Endothelial cell of umbilical vein (primary cell): ENCODE measurements at regions of chr2 and their contacts with region 1.

Region 1: DNA sequence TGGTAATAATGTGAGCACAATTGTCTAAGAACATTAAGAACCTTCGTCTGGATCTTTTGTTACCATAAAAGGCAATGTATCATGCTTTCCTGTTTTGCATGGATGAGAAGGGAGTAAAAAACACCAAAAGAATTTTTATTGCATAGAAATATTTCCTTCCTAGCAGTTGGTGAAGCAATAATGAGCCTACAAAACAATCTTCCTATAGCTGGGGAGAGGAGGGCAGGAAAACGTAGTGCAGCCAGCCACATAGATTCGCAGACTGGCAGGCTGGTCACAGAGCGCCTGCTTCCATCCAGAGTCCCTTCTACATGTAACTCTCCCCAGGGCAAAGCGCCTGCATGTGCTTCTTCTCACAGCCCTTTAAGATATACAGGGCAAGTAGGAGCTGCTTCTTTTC is 190.4 kb downstream of the BABAM2 start:
- DNase-seq: peak; percentile 93
- H3K4me3 ChIP-seq: peak overlapping the region in 1 of 3 experiments; percentile 1
- H3K27ac ChIP-seq: peak overlapping the region; percentile 88
- H3K4me1 ChIP-seq: peaks cover 31% of the 10 kb centered on the region
- H3K27me3 ChIP-seq: no peaks in the 10 kb centered on the region
- CTCF ChIP-seq: no peak
- POLR2A ChIP-seq: peak; percentile 73

Region 2: DNA sequence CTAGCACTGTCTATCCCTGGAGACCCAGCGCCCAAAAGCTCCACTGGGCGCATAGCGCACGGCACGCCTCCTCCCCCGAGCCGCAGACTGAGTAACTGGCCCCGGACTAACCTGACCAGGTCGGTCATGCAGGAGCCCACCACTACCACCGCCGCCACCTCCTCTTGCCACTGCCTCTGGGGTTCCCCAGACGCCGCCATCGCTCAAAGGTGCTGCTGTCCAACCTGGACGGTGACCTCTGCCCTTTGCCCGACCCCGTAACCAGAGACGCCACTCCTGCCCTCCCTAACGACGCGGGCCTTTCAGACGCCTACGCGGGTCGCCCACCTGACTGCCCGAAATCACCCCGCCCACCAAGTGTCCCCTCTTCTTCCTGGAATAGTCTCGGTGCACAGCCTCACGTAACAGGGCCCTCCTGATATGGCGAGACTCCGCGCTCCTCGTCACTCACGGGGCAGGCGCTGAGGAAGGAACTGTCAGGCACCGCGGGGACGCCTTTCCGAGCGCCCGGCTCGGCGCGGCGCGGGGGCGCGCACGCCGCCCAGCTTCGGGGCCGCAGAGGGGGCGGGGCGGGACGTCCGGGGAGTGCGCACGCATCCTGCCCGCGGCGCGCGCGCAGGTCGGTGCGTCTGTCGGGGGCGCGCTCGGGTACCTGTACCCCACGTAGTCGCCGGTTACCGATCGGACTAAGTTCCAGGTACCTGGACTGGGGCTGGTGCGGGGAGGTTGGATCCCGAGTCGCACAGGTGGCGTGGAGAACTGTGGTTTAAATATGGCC is 190.6 kb before region 1 on chr2 and contains the starts of genes BABAM2 and RBKS:
- CTCF ChIA-PET with region 1: no interaction called
- POLR2A ChIA-PET with region 1: interaction called, 3 read pairs
- dilution Hi-C with region 1: no loop called
- intact Hi-C with region 1: loop called (anchors 1 kb)
- DNase-seq: peak; percentile 86
- H3K4me3 ChIP-seq: peak within 1 kb of the TSS; percentile 26 to 71 (median 55)
- H3K27ac ChIP-seq: peak within 1 kb of the TSS; percentile 88
- H3K4me1 ChIP-seq: peaks cover 18% of the 10 kb centered on the region
- H3K27me3 ChIP-seq: no peaks in the 10 kb centered on the region
- CTCF ChIP-seq: no peak
- POLR2A ChIP-seq: peak; percentile 62
- total RNA-seq, gene BABAM2: 26.9 and 27.6 TPM in 2 replicates
- total RNA-seq, gene RBKS: 0.64 and 0.74 TPM in 2 replicates

Region 3: DNA sequence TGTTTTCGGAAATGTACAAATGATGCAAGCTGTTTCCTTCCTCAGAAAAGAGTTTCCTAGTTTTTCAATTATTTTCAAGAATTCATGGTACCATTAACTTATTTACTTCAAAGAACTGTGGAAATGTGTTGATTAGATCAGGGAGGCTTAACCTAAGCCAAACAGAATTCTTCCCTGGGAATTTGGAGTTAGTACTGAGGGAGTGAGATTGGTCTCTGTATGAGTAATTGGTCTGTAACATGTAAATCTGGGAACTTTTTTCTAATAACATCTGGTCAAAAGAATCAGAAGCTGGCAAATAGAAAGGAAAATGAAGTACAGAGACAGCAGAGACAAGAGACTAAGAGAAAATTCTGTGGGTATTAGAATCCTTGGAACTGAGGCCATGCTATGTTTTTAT is 44.6 kb before region 1 on chr2:
- CTCF ChIA-PET with region 1: no interaction called
- POLR2A ChIA-PET with region 1: no interaction called
- dilution Hi-C with region 1: no loop called
- intact Hi-C with region 1: loop called (anchors 2 kb)
- DNase-seq: peak; percentile 48
- H3K4me3 ChIP-seq: no peak overlapping the region
- H3K27ac ChIP-seq: peak overlapping the region; percentile 33
- H3K4me1 ChIP-seq: peaks cover 18% of the 10 kb centered on the region
- H3K27me3 ChIP-seq: no peaks in the 10 kb centered on the region
- CTCF ChIP-seq: no peak
- POLR2A ChIP-seq: no peak

Region 4: DNA sequence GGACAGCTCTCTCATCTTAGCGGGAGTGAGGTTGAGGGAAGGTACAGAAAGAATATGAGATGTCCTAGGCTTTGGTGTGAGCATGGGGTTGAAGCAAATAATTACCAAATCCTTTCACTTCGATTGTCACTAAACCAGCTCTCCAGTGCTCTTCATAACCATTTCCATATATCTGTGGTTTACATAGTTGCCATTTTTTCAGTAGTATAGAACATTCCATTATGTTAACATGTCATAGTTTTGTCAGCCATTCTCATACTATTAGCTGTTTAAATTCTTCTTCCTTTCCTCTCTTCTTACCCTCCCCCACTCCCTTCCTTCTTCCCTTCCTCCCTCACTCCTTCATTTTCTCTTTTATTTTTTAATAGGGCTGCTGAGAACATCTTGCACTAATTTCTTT is 15.5 kb after region 1 on chr2:
- CTCF ChIA-PET with region 1: no interaction called
- POLR2A ChIA-PET with region 1: interaction called, 3 read pairs
- dilution Hi-C with region 1: no loop called
- intact Hi-C with region 1: loop called (anchors 1 kb)
- DNase-seq: no peak
- H3K4me3 ChIP-seq: no peak overlapping the region
- H3K27ac ChIP-seq: no peak overlapping the region
- H3K4me1 ChIP-seq: peaks cover 15% of the 10 kb centered on the region
- H3K27me3 ChIP-seq: no peaks in the 10 kb centered on the region
- CTCF ChIP-seq: no peak
- POLR2A ChIP-seq: no peak

Region 5: DNA sequence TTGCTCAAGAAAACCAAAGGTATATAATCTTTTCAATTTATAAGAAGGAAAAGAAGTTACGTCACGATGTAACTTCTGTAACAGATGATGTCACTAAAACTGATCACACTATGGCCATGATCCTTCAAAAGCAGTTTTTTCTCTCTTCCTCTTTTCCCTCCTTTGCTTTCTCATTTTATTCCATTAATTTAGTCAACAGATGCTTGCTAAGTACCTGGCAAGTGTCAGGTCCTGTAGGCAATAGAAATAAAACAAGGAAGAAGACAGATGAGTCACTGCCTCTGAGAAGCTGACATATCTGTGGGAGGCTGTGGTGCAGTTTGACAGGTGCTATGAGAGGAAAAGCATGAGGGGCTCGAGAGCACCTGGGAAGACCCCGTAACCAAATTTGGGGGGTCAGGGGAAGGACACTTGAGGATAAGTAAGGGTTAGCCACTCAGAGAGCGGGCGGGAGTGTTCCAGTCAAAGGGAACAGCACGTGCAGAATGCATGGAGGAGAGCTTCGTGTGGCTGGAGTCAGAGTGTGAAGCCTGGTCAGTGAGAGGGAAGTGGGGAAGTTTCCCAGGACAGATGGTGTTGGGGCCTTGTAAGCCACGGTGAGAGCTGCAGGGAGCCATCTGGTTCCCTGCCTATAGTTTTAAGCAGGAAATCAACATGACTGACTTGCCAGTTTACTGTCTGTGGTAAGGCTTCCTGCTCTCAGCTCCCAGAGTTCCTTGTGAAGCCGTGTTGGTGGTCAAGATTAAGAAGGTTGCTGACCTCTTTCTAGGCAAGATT is 112.9 kb after region 1 on chr2:
- CTCF ChIA-PET with region 1: no interaction called
- POLR2A ChIA-PET with region 1: no interaction called
- dilution Hi-C with region 1: no loop called
- intact Hi-C with region 1: no loop called
- DNase-seq: peak; percentile 8
- H3K4me3 ChIP-seq: no peak overlapping the region
- H3K27ac ChIP-seq: no peak overlapping the region
- H3K4me1 ChIP-seq: no peaks in the 10 kb centered on the region
- H3K27me3 ChIP-seq: no peaks in the 10 kb centered on the region
- CTCF ChIP-seq: no peak
- POLR2A ChIP-seq: no peak

Region 6: GRCh38 chr2:28276076-28276618 is 195.2 kb after region 1 on chr2:
- CTCF ChIA-PET with region 1: interaction called, 3 read pairs
- POLR2A ChIA-PET with region 1: no interaction called
- dilution Hi-C with region 1: no loop called
- intact Hi-C with region 1: loop called (anchors 2 kb)
- DNase-seq: peak; percentile 96
- H3K4me3 ChIP-seq: no peak overlapping the region
- H3K27ac ChIP-seq: peak overlapping the region; percentile 98
- H3K4me1 ChIP-seq: peaks cover 29% of the 10 kb centered on the region
- H3K27me3 ChIP-seq: no peaks in the 10 kb centered on the region
- CTCF ChIP-seq: no peak
- POLR2A ChIP-seq: no peak